Transverse colon (tissue), 4 donors: ENCODE measurements at regions of chr12 and their contacts with region 1.

Region 1: GRCh38 chr12:24705741-24706358 is 243.1 kb downstream of the BCAT1 start:
- DNase-seq: peak; percentile 27
- H3K4me3 ChIP-seq: no peak overlapping the region
- H3K27ac ChIP-seq: no peak overlapping the region
- H3K4me1 ChIP-seq: no peaks in the 10 kb centered on the region
- H3K27me3 ChIP-seq: no peaks in the 10 kb centered on the region
- CTCF ChIP-seq: no peak
- EP300 ChIP-seq: no peak
- POLR2A ChIP-seq: no peak

Region 2: GRCh38 chr12:22808860-22809259 is 1897.0 kb before region 1 on chr12:
- in situ Hi-C with region 1: no loop called
- intact Hi-C with region 1: loop called (anchors 5 kb)
- DNase-seq: no peak
- H3K4me3 ChIP-seq: no peak overlapping the region
- H3K27ac ChIP-seq: no peak overlapping the region
- H3K4me1 ChIP-seq: no peaks in the 10 kb centered on the region
- H3K27me3 ChIP-seq: no peaks in the 10 kb centered on the region
- CTCF ChIP-seq: no peak
- EP300 ChIP-seq: no peak
- POLR2A ChIP-seq: no peak